ENCODE measurements at regions of chr5 and their contacts with region 1.

Region 1: GRCh38 chr5:7745882-7746610 is 104.9 kb downstream of the CFAP90 start:
- DNase-seq: peak; percentile 88
- ATAC-seq: peak; percentile 96
- H3K4me3 Mint-ChIP-seq: no peak overlapping the region
- H3K27ac Mint-ChIP-seq: peak overlapping the region; percentile 96
- H3K4me1 Mint-ChIP-seq: peaks cover 7% of the 10 kb centered on the region
- H3K27me3 Mint-ChIP-seq: no peaks in the 10 kb centered on the region
- CTCF ChIP-seq: peak; percentile 92

Region 2: GRCh38 chr5:6961837-6962635 is 784.0 kb before region 1 on chr5:
- CTCF ChIA-PET with region 1: no interaction called
- POLR2A ChIA-PET with region 1: no interaction called
- DNase-seq: no peak
- ATAC-seq: no peak
- H3K4me3 Mint-ChIP-seq: no peak overlapping the region
- H3K27ac Mint-ChIP-seq: no peak overlapping the region
- H3K4me1 Mint-ChIP-seq: peaks cover 6% of the 10 kb centered on the region
- H3K27me3 Mint-ChIP-seq: no peaks in the 10 kb centered on the region
- CTCF ChIP-seq: no peak

Region 3: GRCh38 chr5:7078901-7079300 is 667.1 kb before region 1 on chr5:
- CTCF ChIA-PET with region 1: interaction called, 14 read pairs
- POLR2A ChIA-PET with region 1: no interaction called
- DNase-seq: peak; percentile 50
- ATAC-seq: peak; percentile 68
- H3K4me3 Mint-ChIP-seq: peak overlapping the region; percentile 25; the same call in 1 of the 2 replicates
- H3K27ac Mint-ChIP-seq: 0 out of 2 replicates have a peak overlapping the region, but pooled peaks have one; percentile 12
- H3K4me1 Mint-ChIP-seq: peaks cover 50% of the 10 kb centered on the region
- H3K27me3 Mint-ChIP-seq: no peaks in the 10 kb centered on the region
- CTCF ChIP-seq: no peak

Measured in WTC11 (cell line).